Common myeloid progenitor, CD34-positive (primary cell): ENCODE measurements at regions of chr17 and their contacts with region 1.

Region 1: DNA sequence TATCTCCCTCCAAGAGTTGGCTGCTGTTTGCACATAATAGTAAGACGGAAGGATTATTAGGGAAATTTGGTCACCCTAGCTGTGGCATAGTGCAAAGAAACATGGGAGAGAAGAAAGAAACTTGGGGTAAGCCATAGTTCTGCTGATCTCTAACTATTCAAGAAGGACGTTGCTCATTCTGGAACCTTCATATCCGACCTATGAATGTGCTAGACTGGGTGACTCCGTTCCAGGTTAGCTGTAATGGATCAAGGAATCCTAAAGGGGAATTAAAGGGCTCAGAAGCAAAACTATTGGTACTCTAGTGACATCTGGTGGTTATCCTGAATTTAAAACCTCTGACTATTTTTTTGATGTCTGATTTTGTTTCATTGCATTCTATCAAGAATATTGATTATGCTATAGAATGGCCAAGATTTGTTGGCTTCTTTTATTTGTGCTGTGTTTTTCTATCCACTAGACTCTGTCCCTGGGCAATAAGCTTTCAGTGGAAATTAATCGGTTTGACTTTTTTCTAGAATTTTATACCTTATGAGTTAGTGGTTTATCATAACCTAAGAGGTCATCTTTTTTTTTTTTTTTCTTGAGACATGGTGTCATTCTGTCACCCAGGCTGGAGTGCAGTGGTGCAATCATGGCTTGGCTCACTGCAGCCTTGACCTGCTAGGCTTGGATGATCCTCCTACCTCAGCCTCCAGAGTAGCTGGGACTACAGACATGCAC is 19.5 kb downstream of the PCTP start:
- DNase-seq: peak; percentile 36 to 56 (median 51)
- H3K4me3 ChIP-seq: no peak overlapping the region
- H3K27ac ChIP-seq: no peak overlapping the region
- H3K4me1 ChIP-seq: no peaks in the 10 kb centered on the region
- H3K27me3 ChIP-seq: no peaks in the 10 kb centered on the region

Region 2: GRCh38 chr17:55601874-55602364 is 168.4 kb before region 1 on chr17:
- CTCF ChIA-PET with region 1: interaction called, 14 read pairs
- POLR2A ChIA-PET with region 1: no interaction called
- DNase-seq: peak; percentile 41 to 72 (median 49)
- H3K4me3 ChIP-seq: no peak overlapping the region
- H3K27ac ChIP-seq: no peak overlapping the region
- H3K4me1 ChIP-seq: no peaks in the 10 kb centered on the region
- H3K27me3 ChIP-seq: no peaks in the 10 kb centered on the region

Region 3: DNA sequence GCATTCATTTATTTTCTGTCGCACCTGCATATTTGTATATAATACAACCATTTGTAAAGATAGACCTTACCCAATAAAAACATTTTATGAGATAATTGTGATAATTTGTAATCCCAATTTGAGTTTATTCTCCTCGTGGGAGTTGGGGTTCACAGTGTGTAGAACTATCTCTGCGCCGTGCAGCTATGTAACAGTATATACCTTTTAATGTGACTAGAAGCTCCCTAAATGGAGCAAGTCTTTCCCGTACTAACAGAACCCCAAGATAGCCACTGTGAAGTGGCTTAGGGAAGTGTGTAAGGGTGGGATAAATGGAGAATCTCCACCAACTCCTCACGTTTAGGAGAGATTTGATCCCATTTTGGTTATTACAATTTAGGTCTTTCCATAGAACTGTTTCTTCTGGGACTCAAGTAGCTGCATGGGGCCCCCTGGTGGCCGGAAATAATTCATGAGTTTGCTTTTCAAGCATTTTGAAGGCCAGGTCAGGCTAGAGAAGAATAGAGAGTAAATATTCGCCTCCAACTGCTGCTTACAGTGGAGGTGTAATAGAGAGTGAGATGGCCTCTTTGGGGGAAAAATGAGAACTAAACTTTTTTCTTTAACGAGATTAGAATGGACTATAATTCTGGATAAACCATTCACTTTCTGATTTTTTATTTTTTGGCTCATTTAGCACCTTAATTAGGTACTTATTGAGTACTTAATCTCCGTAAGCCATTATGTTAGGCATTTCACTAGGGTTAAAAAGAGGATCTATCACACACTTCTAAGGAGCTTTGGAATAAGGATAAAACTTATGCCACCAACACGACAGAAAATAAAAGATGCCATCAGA is 52.2 kb before region 1 on chr17:
- CTCF ChIA-PET with region 1: interaction called, 15 read pairs
- POLR2A ChIA-PET with region 1: no interaction called
- DNase-seq: peak; percentile 61 to 82 (median 75)
- H3K4me3 ChIP-seq: no peak overlapping the region
- H3K27ac ChIP-seq: no peak overlapping the region
- H3K4me1 ChIP-seq: no peaks in the 10 kb centered on the region
- H3K27me3 ChIP-seq: peaks cover 0 to 7% (median 4%) of the 10 kb centered on the region in 5 experiments

Region 4: GRCh38 chr17:55735731-55736405 is 34.4 kb before region 1 on chr17:
- CTCF ChIA-PET with region 1: interaction called, 11 read pairs
- POLR2A ChIA-PET with region 1: no interaction called
- DNase-seq: peak; percentile 48 to 75 (median 70)
- H3K4me3 ChIP-seq: no peak overlapping the region
- H3K27ac ChIP-seq: no peak overlapping the region
- H3K4me1 ChIP-seq: peaks cover 0 to 3% (median 0%) of the 10 kb centered on the region in 4 experiments
- H3K27me3 ChIP-seq: peaks cover 0 to 1% (median 0%) of the 10 kb centered on the region in 5 experiments

Region 5: DNA sequence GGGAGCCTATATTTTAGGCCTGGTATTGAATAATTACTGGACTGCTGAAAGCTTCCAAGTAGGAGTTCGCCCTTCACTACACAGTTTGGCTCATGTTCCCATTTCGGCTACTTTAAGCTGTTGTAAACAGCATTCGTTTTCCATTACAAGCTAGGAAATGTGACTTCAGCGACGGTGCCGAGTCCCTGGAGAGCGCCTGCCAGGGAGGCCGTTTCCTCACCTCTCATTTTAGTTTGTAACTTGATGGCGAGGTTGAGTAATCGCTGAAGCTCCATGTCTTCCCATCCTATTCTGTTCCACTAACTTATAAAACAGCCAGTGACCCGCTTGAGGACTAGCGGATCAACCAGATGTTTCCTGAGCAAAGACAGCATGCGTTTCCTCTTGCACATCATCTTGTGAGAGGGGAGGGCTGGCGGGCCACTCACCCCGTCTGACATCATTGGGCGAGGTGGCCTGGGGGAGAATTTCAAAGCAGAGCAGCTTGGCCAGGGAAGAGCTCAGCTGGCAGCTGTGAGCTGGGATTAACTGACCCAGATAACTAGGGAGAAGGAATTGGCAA is 13.5 kb after region 1 on chr17:
- CTCF ChIA-PET with region 1: interaction called, 19 read pairs
- POLR2A ChIA-PET with region 1: no interaction called
- DNase-seq: peak; percentile 2 to 63 (median 45)
- H3K4me3 ChIP-seq: no peak overlapping the region
- H3K27ac ChIP-seq: no peak overlapping the region
- H3K4me1 ChIP-seq: peaks cover 0 to 4% (median 1%) of the 10 kb centered on the region in 4 experiments
- H3K27me3 ChIP-seq: no peaks in the 10 kb centered on the region

Region 6: DNA sequence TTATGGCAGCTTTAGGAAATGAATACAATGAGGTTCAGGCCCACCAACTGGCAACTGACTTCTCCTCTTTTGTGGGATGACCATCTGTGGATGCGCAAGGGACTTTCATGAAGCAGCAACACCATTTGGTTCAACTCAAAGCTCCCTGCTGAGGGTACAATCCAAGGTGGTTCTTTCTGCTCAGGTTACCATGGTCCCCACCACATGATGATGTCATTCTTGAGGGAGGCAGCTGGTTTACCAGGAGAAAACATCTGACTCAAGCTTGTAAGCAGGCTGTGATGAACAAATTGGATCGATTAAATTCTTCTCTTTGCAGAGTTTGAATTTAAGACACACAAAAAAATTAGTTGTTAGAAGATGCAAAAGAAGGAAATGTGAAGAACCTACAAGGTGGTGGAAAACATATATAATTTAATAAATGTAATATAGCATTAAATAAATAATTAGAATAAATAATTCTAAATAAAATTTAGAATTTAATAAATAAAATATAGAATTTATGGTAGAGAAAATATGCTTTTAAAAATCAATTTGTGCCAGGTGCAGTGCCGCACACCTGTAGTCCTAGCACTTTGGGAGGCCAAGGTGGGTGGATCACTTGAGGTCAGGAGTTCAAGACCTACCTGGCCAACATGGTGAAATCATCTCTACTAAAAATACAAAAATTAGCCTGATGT is 315.4 kb after region 1 on chr17:
- CTCF ChIA-PET with region 1: no interaction called
- POLR2A ChIA-PET with region 1: no interaction called
- DNase-seq: peak in 1 of 3 donors; percentile 5
- H3K4me3 ChIP-seq: no peak overlapping the region
- H3K27ac ChIP-seq: no peak overlapping the region
- H3K4me1 ChIP-seq: no peaks in the 10 kb centered on the region
- H3K27me3 ChIP-seq: no peaks in the 10 kb centered on the region